Endothelial cell of umbilical vein (primary cell): ENCODE measurements at regions of chr14 and their contacts with region 1.

Region 1: DNA sequence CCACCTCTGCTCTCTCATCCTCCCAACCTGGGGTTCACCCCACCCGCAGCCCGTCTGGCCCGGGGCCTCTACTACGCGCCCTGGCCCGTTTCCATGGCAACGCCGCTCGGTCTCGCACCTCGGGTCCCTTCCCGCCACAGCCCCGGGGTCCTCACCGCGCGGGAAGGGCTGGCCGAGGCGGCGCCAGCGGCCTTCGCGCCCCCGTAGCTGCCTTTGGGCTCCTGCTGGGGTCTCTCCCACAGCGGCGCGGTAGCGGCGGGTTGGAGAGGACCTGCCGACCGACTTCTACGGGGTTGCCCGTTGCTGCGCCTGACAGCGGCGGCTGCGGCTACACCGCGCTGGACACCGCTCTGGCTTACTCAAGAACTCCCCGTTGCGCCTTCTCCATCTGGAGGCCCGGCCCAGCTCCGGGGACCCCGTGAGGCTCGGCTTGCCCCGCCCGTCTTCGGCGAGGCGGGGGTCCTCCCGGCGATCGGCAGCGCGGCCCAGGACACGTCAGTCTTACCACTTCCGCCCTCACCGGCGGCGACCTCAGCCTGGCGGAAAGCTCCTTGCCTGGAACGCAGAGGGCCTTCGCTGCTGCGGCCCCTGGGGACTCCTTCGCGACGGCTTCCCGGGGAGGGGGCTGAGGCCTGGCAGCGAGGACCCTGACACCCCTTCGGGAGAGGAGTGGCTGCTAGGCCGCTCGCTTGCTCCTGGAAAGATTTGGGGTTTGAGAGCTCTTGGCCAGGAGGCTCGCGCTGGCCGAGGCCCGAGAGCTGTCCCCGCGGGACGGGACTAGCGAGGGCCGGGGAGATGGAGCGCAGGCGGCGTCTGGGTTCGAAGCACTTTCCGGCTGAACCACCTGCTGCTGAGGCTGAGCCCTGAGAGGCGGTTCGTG is at the start of gene TM9SF1:
- DNase-seq: peak; percentile 93
- H3K4me3 ChIP-seq: peak within 1 kb of the TSS; percentile 36 to 82 (median 69)
- H3K27ac ChIP-seq: peak within 1 kb of the TSS; percentile 93
- H3K4me1 ChIP-seq: peaks cover 16% of the 10 kb centered on the region
- H3K27me3 ChIP-seq: no peaks in the 10 kb centered on the region
- CTCF ChIP-seq: no peak
- POLR2A ChIP-seq: no peak
- total RNA-seq, gene TM9SF1: 58.5 and 60.7 TPM in 2 replicates

Region 2: GRCh38 chr14:24232121-24232644 is 36.8 kb after region 1 on chr14 and contains the start of gene NEDD8:
- CTCF ChIA-PET with region 1: no interaction called
- POLR2A ChIA-PET with region 1: no interaction called
- dilution Hi-C with region 1: no loop called
- intact Hi-C with region 1: loop called (anchors 2 kb)
- DNase-seq: peak; percentile 94
- H3K4me3 ChIP-seq: peak within 1 kb of the TSS; percentile 63 to 87 (median 67)
- H3K27ac ChIP-seq: peak within 1 kb of the TSS; percentile 88
- H3K4me1 ChIP-seq: peaks cover 31% of the 10 kb centered on the region
- H3K27me3 ChIP-seq: no peaks in the 10 kb centered on the region
- CTCF ChIP-seq: no peak
- POLR2A ChIP-seq: peak; percentile 40
- total RNA-seq, gene NEDD8: 243 and 261 TPM in 2 replicates